Activated CD4-positive, alpha-beta T cell treated with anti-CD3 and anti-CD28 coated beads for 36 hours (primary cell): ENCODE measurements at regions of chr9 and their contacts with region 1.

Region 1: DNA sequence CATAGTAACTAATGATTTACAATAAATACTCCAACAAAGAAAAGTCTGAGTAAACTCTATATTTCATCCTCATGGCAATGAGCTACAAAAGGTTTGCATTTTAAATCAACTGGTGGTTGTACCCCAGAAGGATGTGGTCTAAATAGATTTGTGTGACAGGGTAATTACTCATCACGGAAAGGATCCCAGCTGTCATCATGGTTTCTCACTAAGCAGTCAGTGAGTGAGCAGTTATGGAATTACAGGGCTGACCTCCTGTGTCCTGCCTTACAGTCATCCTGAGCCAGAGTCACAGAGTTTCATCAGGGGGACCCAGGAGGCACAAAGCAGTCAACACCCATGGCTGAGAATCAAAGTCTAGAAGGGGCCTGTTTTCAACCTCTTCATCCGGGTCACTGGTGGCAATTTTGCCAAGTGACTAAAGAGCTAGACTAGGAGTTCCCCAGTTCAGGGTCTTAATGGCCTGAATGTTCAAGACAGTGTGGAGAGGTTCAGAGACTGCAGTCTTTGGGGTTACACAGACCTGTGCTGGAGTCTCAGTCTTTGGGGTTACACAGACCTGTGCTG is 210.7 kb upstream of the SLC24A2 start:
- DNase-seq: peak; percentile 81
- ATAC-seq: peak; percentile 94
- H3K4me3 Mint-ChIP-seq: peak overlapping the region; percentile 42
- H3K27ac Mint-ChIP-seq: peak overlapping the region; percentile 97
- H3K4me1 Mint-ChIP-seq: peaks cover 46% of the 10 kb centered on the region
- H3K27me3 Mint-ChIP-seq: no peaks in the 10 kb centered on the region

Region 2: GRCh38 chr9:18979367-18979766 is 1020.2 kb before region 1 on chr9:
- CTCF ChIA-PET with region 1: no interaction called
- POLR2A ChIA-PET with region 1: no interaction called
- intact Hi-C with region 1: no loop called
- DNase-seq: no peak
- ATAC-seq: no peak
- H3K4me3 Mint-ChIP-seq: no peak overlapping the region
- H3K27ac Mint-ChIP-seq: no peak overlapping the region
- H3K4me1 Mint-ChIP-seq: peaks cover 8% of the 10 kb centered on the region
- H3K27me3 Mint-ChIP-seq: peaks cover 2% of the 10 kb centered on the region

Region 3: GRCh38 chr9:19925817-19926503 is 73.6 kb before region 1 on chr9:
- CTCF ChIA-PET with region 1: interaction called, 5 read pairs
- POLR2A ChIA-PET with region 1: no interaction called
- intact Hi-C with region 1: loop called in 1 of 2 experiments (anchors 2 kb)
- DNase-seq: peak; percentile 87
- ATAC-seq: peak; percentile 98
- H3K4me3 Mint-ChIP-seq: peak overlapping the region; percentile 60
- H3K27ac Mint-ChIP-seq: peak overlapping the region; percentile 22
- H3K4me1 Mint-ChIP-seq: peaks cover 15% of the 10 kb centered on the region
- H3K27me3 Mint-ChIP-seq: peaks cover 16% of the 10 kb centered on the region

Region 4: GRCh38 chr9:20043035-20043434 is 43.5 kb after region 1 on chr9:
- CTCF ChIA-PET with region 1: interaction called, 3 read pairs
- POLR2A ChIA-PET with region 1: no interaction called
- intact Hi-C with region 1: loop called in 1 of 2 experiments (anchors 2 kb)
- DNase-seq: peak; percentile 35
- ATAC-seq: peak; percentile 85
- H3K4me3 Mint-ChIP-seq: peak overlapping the region; percentile 34
- H3K27ac Mint-ChIP-seq: peak overlapping the region; percentile 26
- H3K4me1 Mint-ChIP-seq: peaks cover 27% of the 10 kb centered on the region
- H3K27me3 Mint-ChIP-seq: no peaks in the 10 kb centered on the region

Region 5: GRCh38 chr9:20319641-20320337 is 320.2 kb after region 1 on chr9:
- CTCF ChIA-PET with region 1: no interaction called
- POLR2A ChIA-PET with region 1: no interaction called
- intact Hi-C with region 1: loop called (anchors 1 to 2 kb)
- DNase-seq: peak; percentile 52
- ATAC-seq: peak; percentile 74
- H3K4me3 Mint-ChIP-seq: no peak overlapping the region
- H3K27ac Mint-ChIP-seq: peak overlapping the region; percentile 29
- H3K4me1 Mint-ChIP-seq: peaks cover 90% of the 10 kb centered on the region
- H3K27me3 Mint-ChIP-seq: no peaks in the 10 kb centered on the region

Region 6: DNA sequence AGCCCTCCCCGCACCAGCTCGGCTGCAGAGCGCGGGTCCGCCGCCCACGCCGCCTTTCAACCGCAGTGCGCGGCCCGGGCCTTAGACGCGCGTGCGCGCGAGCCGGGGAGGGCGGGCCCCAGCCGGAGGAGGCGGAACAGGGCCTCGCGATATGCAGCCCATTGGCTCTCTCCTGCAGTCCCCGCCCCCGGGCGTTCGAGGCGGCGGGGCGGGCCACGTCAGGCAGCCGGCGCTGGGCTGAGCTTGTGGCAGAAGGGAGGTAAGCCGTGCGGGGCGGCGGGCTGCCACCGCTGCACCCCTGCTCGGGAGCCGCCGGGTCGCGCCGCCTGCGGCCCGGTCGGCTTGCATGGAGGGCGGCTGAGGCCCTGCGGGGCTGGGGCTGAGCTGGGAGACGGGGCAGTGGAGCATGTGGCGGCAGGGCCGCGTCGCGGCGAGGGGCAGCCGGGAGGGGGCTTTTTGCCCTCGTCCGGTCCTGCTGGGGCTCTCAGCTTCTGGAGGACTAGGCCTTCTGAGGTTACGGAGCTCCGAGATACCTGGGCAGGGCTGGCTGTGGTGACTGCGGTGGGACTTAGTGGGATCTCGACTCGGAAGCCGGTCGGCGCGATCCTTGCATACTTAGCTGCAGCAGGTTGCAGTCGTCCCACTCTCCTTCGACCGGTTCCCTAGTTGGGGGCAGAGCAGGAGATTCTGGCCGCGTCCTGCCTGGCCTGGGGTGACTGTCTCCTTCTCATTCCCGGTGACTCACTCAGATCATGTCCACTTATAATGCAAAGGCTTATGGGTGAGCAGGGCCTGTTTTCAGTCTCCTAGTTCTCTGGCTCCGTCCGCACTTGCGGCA is 684.7 kb after region 1 on chr9 and contains the start of gene FOCAD:
- CTCF ChIA-PET with region 1: no interaction called
- POLR2A ChIA-PET with region 1: interaction called, 3 read pairs
- intact Hi-C with region 1: loop called in 1 of 2 experiments (anchors 2 kb)
- DNase-seq: peak; percentile 97
- ATAC-seq: peak; percentile 98
- H3K4me3 Mint-ChIP-seq: peak within 1 kb of the TSS; percentile 86
- H3K27ac Mint-ChIP-seq: peak within 1 kb of the TSS; percentile 75
- H3K4me1 Mint-ChIP-seq: peaks cover 27% of the 10 kb centered on the region
- H3K27me3 Mint-ChIP-seq: no peaks in the 10 kb centered on the region
- total RNA-seq, gene FOCAD: 32.5 to 34.3 TPM

Region 7: GRCh38 chr9:21096172-21096900 is 1096.8 kb after region 1 on chr9:
- CTCF ChIA-PET with region 1: no interaction called
- POLR2A ChIA-PET with region 1: no interaction called
- intact Hi-C with region 1: loop called in 1 of 2 experiments (anchors 2 kb)
- DNase-seq: peak; percentile 64
- ATAC-seq: peak; percentile 95
- H3K4me3 Mint-ChIP-seq: peak overlapping the region; percentile 58
- H3K27ac Mint-ChIP-seq: peak overlapping the region; percentile 87
- H3K4me1 Mint-ChIP-seq: peaks cover 31% of the 10 kb centered on the region
- H3K27me3 Mint-ChIP-seq: no peaks in the 10 kb centered on the region